HEK293 (cell line): ENCODE measurements at regions of chr16 and their contacts with region 1.

Region 1: DNA sequence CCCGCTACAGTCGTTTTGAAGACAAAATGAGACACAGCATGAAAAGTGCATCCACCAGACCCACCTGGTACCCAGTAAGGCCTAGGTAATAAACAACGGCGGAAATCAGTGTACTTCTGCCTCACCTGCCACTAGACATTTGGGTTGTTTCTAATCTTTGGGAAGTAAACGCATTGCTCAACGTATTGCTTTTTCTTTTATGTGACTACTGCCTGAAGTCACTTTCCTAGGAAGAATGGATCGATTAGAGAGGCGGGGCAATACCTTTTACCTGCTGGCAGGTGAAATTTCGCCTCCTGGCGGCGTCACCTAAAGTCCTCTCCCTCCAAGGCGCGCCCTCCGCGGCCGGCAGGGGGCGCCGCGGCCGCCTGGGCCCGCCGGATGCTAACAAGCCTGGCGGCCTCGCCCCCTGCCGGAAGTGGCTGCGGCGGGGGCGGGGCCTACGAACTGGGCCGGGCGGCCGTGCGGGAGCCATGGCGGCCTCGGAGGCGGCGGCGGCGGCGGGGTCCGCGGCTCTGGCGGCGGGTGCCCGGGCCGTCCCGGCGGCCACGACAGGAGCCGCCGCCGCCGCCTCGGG is at the start of gene ATMIN:
- H3K4me3 ChIP-seq: peak within 1 kb of the TSS; percentile 89
- H3K27ac ChIP-seq: peak within 1 kb of the TSS; percentile 76; the same call in 1 of the 2 replicates
- H3K4me1 ChIP-seq: peaks cover 3% of the 10 kb centered on the region; the same call in 1 of the 2 replicates
- CTCF ChIP-seq: peak; percentile 92

Region 2: DNA sequence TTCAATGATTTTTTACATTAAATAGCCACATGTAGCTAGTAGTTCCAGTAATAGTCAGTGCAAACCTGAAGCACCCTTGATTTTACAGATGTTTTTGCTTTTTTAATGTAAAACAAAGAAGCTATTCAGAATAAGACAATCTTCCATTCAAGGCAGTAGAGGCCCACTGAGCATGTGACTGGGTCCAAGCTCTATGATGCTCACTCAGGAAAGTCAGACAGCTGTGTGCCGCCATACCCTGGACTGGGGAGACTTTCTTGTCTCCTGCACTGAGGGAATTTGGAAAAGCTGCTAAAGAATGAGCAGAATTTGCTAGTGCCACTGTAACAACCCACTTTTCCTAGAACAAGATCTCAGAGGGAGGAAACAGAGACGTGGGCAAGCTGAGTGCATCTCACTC is 17.0 kb before region 1 on chr16:
- CTCF ChIA-PET with region 1: interaction called, 24 read pairs
- POLR2A ChIA-PET with region 1: no interaction called
- H3K4me3 ChIP-seq: no peak overlapping the region
- H3K27ac ChIP-seq: no peak overlapping the region
- H3K4me1 ChIP-seq: no peaks in the 10 kb centered on the region
- CTCF ChIP-seq: no peak

Region 3: DNA sequence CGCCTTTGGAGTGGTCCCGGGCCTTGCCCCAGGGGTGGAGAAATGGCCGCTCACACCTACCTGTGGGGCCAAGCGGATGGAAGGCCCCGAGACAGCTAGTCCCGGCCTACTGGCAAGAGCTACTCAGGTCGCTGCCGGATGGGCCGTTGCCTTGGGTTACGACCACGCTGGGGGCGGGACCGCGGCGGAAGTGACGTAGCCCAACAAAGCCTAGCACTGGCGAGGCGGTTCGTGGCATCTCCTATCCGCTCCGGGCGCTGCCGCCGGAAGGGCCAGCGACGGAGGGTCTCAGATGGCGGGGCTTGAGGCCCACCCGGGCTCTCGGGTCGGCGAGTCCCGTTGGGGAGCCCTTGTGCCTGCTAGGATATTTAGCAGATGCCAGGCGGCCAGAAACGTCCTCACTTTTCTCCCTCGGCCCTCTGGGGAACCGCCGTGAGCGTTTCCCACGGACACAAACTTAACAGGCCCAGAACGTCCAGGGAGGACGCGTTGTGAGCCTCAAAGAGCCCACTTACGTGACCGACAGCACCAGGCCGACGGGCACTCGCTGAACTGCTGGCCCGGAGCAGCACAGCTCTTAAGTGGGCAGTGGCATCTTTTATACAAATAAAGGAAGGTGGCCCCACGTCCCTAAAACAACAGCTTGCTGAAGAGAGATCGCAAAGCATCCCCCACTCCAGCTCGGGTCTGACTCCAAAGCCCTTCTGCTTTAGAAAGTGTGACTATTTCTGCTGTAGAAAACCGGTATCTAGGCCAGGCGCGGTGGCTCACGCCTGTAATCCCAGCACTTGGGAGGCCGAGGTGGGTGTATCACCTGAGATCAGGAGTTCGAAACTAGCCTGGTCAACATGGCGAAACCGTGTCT is 41.8 kb after region 1 on chr16 and contains the start of gene C16orf46:
- CTCF ChIA-PET with region 1: interaction called, 10 read pairs
- POLR2A ChIA-PET with region 1: interaction called, 4 read pairs
- H3K4me3 ChIP-seq: peak within 1 kb of the TSS; percentile 82
- H3K27ac ChIP-seq: peak within 1 kb of the TSS; percentile 90
- H3K4me1 ChIP-seq: no peaks in the 10 kb centered on the region
- CTCF ChIP-seq: no peak

Region 4: GRCh38 chr16:81121474-81121995 is 86.0 kb after region 1 on chr16:
- CTCF ChIA-PET with region 1: no interaction called
- POLR2A ChIA-PET with region 1: no interaction called
- H3K4me3 ChIP-seq: no peak overlapping the region
- H3K27ac ChIP-seq: no peak overlapping the region
- H3K4me1 ChIP-seq: no peaks in the 10 kb centered on the region
- CTCF ChIP-seq: no peak